ENCODE measurements at regions of chr11 and their contacts with region 1.

Region 1: DNA sequence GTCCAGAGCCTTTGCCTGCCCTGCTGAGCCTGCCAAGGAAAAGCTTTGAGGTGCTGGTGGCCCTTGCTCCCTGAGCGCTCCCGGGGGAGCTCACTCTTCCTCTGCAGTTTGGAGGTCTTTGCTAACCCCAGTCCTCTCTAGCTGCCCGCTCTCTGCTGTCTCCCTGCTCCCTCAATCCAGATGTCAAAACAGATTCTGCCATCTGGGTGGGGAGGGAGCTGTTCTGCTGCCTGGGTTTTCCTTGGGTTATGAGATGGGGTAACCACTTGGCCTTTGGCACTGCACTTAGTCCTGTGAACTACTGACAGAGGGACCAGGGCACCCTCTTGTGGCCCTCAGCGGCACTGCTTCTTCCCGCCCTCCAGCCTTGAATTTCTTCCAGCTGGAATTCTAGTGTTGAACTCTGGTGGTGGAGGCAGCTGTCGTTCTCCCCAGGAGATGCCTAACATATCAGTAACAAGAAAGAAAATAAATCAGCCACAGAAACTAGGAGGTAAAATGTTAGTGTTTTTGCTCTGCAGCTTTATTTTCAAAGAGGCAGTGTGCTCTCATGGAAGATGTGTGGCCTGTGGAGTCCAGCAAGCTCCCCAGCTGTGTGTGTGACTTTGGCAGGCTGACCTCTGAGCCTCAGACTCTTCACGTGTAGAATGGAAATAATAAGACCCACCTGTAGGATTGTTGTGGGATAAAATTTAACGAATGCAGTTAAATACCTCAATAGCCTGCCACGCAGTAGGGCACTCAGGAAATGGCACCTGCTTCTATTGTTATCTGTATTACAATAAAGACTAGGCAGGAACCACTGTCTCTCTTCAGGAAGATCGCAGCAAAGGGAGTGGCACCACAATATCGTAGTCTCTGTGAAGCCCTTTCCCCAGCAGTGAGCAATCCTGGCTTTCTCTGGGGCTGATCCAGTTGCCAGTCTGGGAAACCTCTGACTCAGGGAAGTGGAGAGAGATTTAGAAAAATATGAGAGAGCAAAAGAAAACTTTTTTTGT is 23.4 kb downstream of the ARFGAP2 start:
- DNase-seq: peak; percentile 92
- ATAC-seq: peak; percentile 92
- H3K4me3 Mint-ChIP-seq: no peak overlapping the region
- H3K27ac Mint-ChIP-seq: peak overlapping the region; percentile 23; the same call in 1 of the 2 replicates
- H3K4me1 Mint-ChIP-seq: peaks cover 21% of the 10 kb centered on the region
- H3K27me3 Mint-ChIP-seq: no peaks in the 10 kb centered on the region
- CTCF ChIP-seq: peak; percentile 89

Region 2: DNA sequence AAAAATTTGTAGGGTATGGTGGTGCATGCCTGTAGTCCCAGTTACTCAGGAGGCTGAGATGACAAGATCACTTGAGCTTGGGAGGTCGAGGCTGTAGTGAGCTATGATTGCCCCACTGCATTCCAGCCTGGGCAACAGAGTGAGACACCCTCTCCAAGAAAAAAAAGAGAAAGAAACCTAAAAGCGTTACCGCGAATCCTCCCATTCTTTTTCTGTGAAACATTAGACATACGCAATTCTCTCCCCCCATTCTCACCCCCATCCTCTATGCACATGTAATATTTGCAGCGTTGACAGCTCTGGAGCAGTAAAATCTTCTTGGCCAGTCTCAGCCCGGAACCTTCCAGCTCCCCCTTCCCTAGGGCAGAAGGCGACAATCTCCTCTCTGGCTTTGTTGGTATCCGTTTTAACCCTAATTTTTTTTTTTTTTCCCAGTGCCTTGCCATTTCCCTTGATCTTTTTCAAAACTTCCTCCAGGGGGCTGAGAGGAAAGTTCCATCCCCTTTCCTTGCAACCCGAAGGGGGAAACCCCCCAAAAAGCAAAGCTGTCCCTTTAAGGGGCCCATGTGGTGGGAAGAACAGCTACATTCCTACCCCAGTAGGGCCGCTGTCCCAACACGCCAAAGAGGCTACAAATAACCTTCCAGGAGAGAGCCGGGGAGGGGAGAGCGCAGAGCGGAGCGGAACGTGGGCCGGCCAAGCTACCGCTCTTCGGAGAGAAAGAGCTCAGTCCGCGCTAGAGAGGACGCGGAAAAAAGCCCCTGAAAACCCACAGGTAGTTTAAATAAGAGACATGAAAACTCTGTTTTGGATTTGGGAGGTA is 236.8 kb before region 1 on chr11:
- CTCF ChIA-PET with region 1: interaction called, 182 read pairs
- POLR2A ChIA-PET with region 1: interaction called, 7 read pairs
- DNase-seq: peak; percentile 70
- ATAC-seq: peak; percentile 18
- H3K4me3 Mint-ChIP-seq: peak overlapping the region; percentile 89
- H3K27ac Mint-ChIP-seq: peak overlapping the region; percentile 50
- H3K4me1 Mint-ChIP-seq: peaks cover 71% of the 10 kb centered on the region
- H3K27me3 Mint-ChIP-seq: peaks cover 7% of the 10 kb centered on the region; the same call in 1 of the 2 replicates
- CTCF ChIP-seq: no peak

Region 3: GRCh38 chr11:46984987-46985386 is 168.3 kb before region 1 on chr11:
- CTCF ChIA-PET with region 1: interaction called, 20 read pairs
- POLR2A ChIA-PET with region 1: no interaction called
- DNase-seq: no peak
- ATAC-seq: no peak
- H3K4me3 Mint-ChIP-seq: no peak overlapping the region
- H3K27ac Mint-ChIP-seq: no peak overlapping the region
- H3K4me1 Mint-ChIP-seq: no peaks in the 10 kb centered on the region
- H3K27me3 Mint-ChIP-seq: peaks cover 2% of the 10 kb centered on the region; the same call in 1 of the 2 replicates
- CTCF ChIP-seq: no peak

Region 4: GRCh38 chr11:47056261-47056915 is 96.9 kb before region 1 on chr11:
- CTCF ChIA-PET with region 1: interaction called, 16 read pairs
- POLR2A ChIA-PET with region 1: no interaction called
- DNase-seq: no peak
- ATAC-seq: no peak
- H3K4me3 Mint-ChIP-seq: no peak overlapping the region
- H3K27ac Mint-ChIP-seq: peak overlapping the region; percentile 29
- H3K4me1 Mint-ChIP-seq: peaks cover 32% of the 10 kb centered on the region
- H3K27me3 Mint-ChIP-seq: no peaks in the 10 kb centered on the region
- CTCF ChIP-seq: no peak

Region 5: GRCh38 chr11:47104261-47104950 is 48.8 kb before region 1 on chr11:
- CTCF ChIA-PET with region 1: interaction called, 17 read pairs
- POLR2A ChIA-PET with region 1: no interaction called
- DNase-seq: peak; percentile 24
- ATAC-seq: peak; percentile 78
- H3K4me3 Mint-ChIP-seq: no peak overlapping the region
- H3K27ac Mint-ChIP-seq: peak overlapping the region; percentile 93
- H3K4me1 Mint-ChIP-seq: peaks cover 20% of the 10 kb centered on the region
- H3K27me3 Mint-ChIP-seq: no peaks in the 10 kb centered on the region
- CTCF ChIP-seq: no peak

Region 6: GRCh38 chr11:47176328-47177228 is 23.3 kb after region 1 on chr11 and contains the start of gene ARFGAP2:
- CTCF ChIA-PET with region 1: no interaction called
- POLR2A ChIA-PET with region 1: no interaction called
- DNase-seq: peak; percentile 95
- ATAC-seq: peak; percentile 94
- H3K4me3 Mint-ChIP-seq: peak within 1 kb of the TSS; percentile 88
- H3K27ac Mint-ChIP-seq: peak within 1 kb of the TSS; percentile 98
- H3K4me1 Mint-ChIP-seq: peaks cover 16% of the 10 kb centered on the region
- H3K27me3 Mint-ChIP-seq: no peaks in the 10 kb centered on the region
- CTCF ChIP-seq: no peak
- total RNA-seq, gene ARFGAP2: 55.7 to 73.0 TPM (median 60.5 TPM) in 3 replicates

Region 7: GRCh38 chr11:47259178-47259977 is 106.1 kb after region 1 on chr11:
- CTCF ChIA-PET with region 1: interaction called, 14 read pairs
- POLR2A ChIA-PET with region 1: no interaction called
- DNase-seq: peak; percentile 80
- ATAC-seq: peak; percentile 78
- H3K4me3 Mint-ChIP-seq: peak overlapping the region; percentile 16
- H3K27ac Mint-ChIP-seq: peak overlapping the region; percentile 78
- H3K4me1 Mint-ChIP-seq: peaks cover 24% of the 10 kb centered on the region
- H3K27me3 Mint-ChIP-seq: no peaks in the 10 kb centered on the region
- CTCF ChIP-seq: peak; percentile 38; the same call in 1 of the 2 replicates

Measured in WTC11 (cell line).